Activated CD4-positive, alpha-beta T cell treated with anti-CD3 and anti-CD28 coated beads for 36 hours (primary cell): ENCODE measurements at regions of chr7 and their contacts with region 1.

Region 1: DNA sequence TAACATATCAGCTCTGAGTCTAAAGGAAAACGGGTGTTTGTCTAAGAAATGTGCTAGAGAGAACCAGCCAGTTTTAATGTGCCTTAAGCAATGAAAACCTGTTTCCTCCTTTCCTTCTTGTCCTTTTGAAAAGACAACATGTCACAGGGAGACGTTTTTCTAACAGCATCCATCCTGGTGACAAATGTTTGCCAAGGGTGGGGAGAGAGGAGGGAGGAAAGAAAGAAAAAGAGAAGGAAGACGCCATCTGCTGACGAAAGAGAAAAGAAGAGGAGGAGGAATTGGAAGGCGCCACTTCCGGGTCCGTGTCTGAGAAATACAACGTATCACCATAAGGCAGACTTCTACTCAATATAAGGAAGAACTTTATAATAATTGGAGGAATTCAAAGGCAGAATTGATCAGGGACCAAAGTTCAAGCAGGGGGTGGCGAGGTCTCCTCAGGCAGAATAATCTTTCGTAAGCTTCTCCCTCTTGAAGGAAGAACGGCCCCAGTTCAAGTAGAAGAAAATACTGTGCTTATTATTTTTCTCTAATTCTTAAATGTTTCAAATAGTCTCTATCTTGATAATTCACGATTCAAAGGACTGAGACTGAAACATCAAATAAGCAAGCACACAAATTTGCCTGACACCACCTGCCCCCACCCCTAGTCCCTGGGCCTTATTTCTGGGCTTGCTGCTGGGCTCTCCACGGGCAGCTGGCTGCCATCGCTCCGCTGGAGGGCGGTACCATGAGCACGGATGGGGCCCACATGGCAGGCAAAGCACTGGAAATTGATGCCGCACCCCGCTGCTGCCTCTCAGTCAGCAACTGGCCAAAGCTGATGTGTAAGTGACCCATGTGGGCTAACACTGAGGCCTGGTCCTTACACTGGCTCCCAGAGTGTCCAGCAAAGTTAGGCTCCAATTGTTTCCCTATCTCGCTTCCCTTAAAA is 273.7 kb upstream of the KLF14 start:
- DNase-seq: peak; percentile 80
- ATAC-seq: peak; percentile 27
- H3K4me3 Mint-ChIP-seq: peak overlapping the region; percentile 68
- H3K27ac Mint-ChIP-seq: peak overlapping the region; percentile 96
- H3K4me1 Mint-ChIP-seq: peaks cover 90% of the 10 kb centered on the region
- H3K27me3 Mint-ChIP-seq: no peaks in the 10 kb centered on the region

Region 2: GRCh38 chr7:129530795-129531391 is 1476.8 kb before region 1 on chr7:
- CTCF ChIA-PET with region 1: no interaction called
- POLR2A ChIA-PET with region 1: no interaction called
- intact Hi-C with region 1: loop called in 1 of 2 experiments (anchors 2 kb)
- DNase-seq: peak; percentile 70
- ATAC-seq: peak; percentile 96
- H3K4me3 Mint-ChIP-seq: no peak overlapping the region
- H3K27ac Mint-ChIP-seq: peak overlapping the region; percentile 13
- H3K4me1 Mint-ChIP-seq: peaks cover 11% of the 10 kb centered on the region
- H3K27me3 Mint-ChIP-seq: peaks cover 10% of the 10 kb centered on the region

Region 3: DNA sequence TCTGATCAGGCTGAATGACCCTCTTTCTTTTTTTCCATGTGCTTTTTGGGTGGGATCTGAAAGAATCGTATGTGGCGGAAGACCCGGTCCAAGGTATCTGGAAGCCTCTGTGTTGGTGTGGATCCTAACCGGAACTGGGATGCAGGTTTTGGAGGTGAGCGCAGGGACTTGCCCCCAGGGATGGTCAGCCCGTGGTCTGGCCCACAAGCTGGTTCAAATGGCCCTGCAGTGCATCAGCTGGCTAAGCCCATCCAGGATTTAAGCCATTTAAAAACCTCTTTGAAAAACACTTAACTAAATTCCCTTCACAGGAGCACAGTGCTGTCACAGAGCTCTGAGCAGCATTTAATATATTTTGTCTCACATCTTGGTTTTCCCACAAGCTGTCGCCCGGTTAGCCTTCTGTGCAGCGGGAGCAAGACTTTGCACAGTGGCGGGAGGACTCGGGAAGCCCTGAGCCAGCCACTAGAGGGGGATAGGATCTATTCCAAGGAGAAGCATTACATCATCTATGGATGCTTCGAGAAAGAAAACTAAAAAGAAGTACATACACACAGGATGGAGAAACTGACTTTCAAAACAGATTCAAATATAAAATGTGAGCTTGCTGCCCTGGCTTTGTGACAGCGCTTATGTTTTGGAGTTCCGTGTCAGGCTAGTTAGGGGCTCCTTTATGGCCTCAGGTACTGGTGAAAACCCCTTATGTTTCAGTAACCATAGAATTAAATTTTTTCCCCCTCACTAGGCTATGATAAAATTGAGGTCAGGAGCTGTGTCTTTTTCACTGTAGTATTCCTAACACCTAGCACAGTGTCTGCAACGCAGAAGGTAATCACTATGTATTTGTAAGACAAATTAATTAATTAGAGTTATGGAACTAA is 729.7 kb before region 1 on chr7:
- CTCF ChIA-PET with region 1: no interaction called
- POLR2A ChIA-PET with region 1: no interaction called
- intact Hi-C with region 1: loop called in 1 of 2 experiments (anchors 5 kb)
- DNase-seq: no peak
- ATAC-seq: no peak
- H3K4me3 Mint-ChIP-seq: no peak overlapping the region
- H3K27ac Mint-ChIP-seq: peak overlapping the region; percentile 79
- H3K4me1 Mint-ChIP-seq: peaks cover 37% of the 10 kb centered on the region
- H3K27me3 Mint-ChIP-seq: peaks cover 4% of the 10 kb centered on the region

Region 4: DNA sequence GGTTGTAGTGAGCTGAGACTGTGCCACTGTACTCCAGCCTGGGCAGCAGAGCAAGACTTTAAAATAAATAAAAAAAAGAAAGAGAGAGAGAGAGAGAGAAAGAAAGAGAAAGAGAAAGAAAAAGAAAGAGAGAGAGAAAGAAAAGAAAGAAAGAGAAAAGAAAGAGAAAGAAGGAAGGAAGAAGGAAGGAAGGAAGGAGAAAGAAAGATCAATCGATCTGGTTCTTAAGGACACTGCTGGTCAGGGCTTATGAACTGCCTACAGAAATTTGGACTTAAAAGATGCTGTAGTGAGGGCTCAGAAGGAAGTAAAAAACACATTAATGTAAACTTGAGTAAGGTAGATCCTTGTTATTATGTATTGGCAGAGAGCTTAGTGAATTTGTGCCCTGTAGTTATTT is 401.5 kb before region 1 on chr7:
- CTCF ChIA-PET with region 1: no interaction called
- POLR2A ChIA-PET with region 1: no interaction called
- intact Hi-C with region 1: no loop called
- DNase-seq: no peak
- ATAC-seq: no peak
- H3K4me3 Mint-ChIP-seq: no peak overlapping the region
- H3K27ac Mint-ChIP-seq: no peak overlapping the region
- H3K4me1 Mint-ChIP-seq: no peaks in the 10 kb centered on the region
- H3K27me3 Mint-ChIP-seq: no peaks in the 10 kb centered on the region

Region 5: GRCh38 chr7:130966246-130967009 is 41.2 kb before region 1 on chr7:
- CTCF ChIA-PET with region 1: interaction called, 14 read pairs
- POLR2A ChIA-PET with region 1: interaction called, 12 read pairs
- intact Hi-C with region 1: loop called (anchors 1 kb)
- DNase-seq: peak; percentile 39
- ATAC-seq: peak; percentile 3
- H3K4me3 Mint-ChIP-seq: peak overlapping the region; percentile 11
- H3K27ac Mint-ChIP-seq: peak overlapping the region; percentile 87
- H3K4me1 Mint-ChIP-seq: peaks cover 73% of the 10 kb centered on the region
- H3K27me3 Mint-ChIP-seq: no peaks in the 10 kb centered on the region

Region 6: DNA sequence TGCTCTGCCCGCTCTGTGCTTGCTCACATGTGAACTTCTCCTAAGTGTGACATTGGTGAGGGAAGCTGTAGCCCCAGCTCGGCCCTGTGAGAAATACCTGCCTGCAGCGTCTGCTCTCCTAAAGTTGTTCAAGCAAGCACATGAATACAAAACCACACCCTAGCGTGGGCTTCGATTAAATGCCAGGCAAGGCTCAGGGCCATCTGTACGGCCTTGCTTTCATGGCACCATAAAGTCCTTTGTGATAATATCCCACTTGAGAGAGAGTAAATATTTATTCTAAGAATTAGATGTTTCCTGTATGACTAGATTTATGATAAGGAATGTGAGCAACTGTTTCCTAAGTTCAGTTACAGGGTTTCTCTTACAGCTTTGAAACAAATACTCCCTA is 10.8 kb before region 1 on chr7:
- CTCF ChIA-PET with region 1: interaction called, 29 read pairs
- POLR2A ChIA-PET with region 1: no interaction called
- intact Hi-C with region 1: loop called in 1 of 2 experiments (anchors 2 kb)
- DNase-seq: peak; percentile 67
- ATAC-seq: peak; percentile 66
- H3K4me3 Mint-ChIP-seq: peak overlapping the region; percentile 64
- H3K27ac Mint-ChIP-seq: peak overlapping the region; percentile 92
- H3K4me1 Mint-ChIP-seq: peaks cover 86% of the 10 kb centered on the region
- H3K27me3 Mint-ChIP-seq: no peaks in the 10 kb centered on the region

Region 7: GRCh38 chr7:131027287-131027773 is 19.7 kb after region 1 on chr7:
- CTCF ChIA-PET with region 1: interaction called, 6 read pairs
- POLR2A ChIA-PET with region 1: interaction called, 8 read pairs
- intact Hi-C with region 1: loop called (anchors 1 kb)
- DNase-seq: peak; percentile 70
- ATAC-seq: peak; percentile 27
- H3K4me3 Mint-ChIP-seq: peak overlapping the region; percentile 25
- H3K27ac Mint-ChIP-seq: peak overlapping the region; percentile 85
- H3K4me1 Mint-ChIP-seq: peaks cover 85% of the 10 kb centered on the region
- H3K27me3 Mint-ChIP-seq: no peaks in the 10 kb centered on the region

Region 8: DNA sequence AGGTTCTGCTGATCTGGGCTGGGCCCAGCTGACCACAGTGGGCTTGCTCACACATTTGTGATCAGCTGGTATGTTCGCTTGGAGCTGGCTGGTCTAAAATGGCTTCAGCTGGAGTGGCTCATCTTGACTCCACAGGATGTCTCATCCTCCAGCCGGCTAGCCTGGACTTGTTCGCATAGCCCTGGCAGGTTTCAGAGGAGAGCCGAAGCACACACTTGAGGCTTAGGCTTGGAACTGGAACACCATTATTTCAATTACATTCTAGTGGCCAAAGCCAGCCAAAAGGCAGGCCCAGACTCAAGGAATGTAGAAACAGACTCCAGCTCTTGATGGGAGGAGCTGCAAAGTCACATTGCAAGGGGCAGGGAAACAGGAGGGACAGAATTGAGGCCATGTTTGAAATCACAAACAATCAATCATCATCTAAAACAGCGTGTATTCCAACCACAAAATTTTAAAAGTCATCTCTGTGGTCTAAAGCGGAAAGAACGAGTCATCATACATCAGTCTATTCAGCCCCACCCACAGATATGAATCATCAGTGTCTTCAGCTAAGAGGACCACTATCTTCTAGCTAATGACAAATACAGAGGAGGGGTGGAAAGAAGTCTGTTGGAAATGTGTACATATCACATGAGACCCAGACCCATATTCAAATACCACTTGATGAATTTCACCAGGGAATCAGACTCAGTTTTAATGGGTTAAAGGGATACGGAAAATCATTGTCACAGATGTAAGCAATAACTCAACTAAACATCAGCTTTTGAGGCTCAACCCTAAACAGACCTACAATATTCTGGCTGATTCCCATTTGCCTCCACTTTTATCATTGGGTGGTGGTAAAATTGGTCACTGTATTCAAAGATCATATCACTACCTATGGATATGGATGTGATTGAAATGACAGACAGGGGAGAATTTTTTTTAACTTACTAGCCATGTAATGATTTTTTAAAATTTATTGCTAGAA is 181.0 kb after region 1 on chr7:
- CTCF ChIA-PET with region 1: no interaction called
- POLR2A ChIA-PET with region 1: no interaction called
- intact Hi-C with region 1: loop called in 1 of 2 experiments (anchors 2 kb)
- DNase-seq: peak; percentile 65
- ATAC-seq: peak; percentile 84
- H3K4me3 Mint-ChIP-seq: peak overlapping the region; percentile 58
- H3K27ac Mint-ChIP-seq: peak overlapping the region; percentile 96
- H3K4me1 Mint-ChIP-seq: peaks cover 55% of the 10 kb centered on the region
- H3K27me3 Mint-ChIP-seq: no peaks in the 10 kb centered on the region